Mammary epithelial cell (primary cell): ENCODE measurements at regions of chr12 and their contacts with region 1.

Region 1: DNA sequence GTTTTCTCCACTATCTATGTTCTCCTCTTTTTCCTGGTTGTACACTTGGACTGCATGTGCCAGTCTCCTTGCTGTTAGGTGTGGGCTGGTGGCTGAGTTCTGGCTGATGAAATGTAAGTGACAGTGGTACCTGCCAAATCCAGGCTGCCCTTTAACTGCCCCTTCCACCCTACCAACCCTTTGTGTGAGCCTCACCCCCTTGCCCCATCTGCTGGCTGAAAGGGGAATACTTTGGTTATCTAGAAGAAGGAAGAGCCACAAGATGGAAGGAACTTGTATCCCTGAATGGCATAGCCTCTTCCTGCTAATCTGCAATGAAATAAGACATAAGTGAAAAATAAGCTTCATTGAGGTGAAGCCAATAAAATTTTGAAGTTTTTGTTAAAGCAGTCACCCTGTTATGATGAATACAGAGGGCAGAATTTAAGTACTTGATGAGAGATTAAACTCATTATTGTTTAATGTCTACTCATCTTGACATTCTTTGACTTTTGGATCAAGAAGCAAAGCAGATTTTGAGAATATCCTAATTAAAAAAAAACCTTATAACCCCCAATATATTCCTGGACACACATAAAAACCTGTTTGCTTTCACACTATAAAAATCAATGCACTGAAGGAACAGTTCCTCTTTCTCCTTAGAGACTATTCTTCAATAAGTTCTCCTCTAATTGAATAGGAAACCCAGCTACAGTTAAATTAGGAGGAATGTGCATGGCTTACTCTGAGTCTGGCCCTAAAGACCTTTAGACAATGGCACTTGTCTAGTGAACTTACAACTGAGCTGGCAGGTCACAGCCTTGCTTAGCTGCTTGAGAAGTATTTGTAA is 262.6 kb upstream of the BTG1 start:
- DNase-seq: peak; percentile 55
- H3K4me3 ChIP-seq: no peak overlapping the region
- H3K27ac ChIP-seq: no peak overlapping the region
- H3K4me1 ChIP-seq: no peaks in the 10 kb centered on the region
- H3K27me3 ChIP-seq: no peaks in the 10 kb centered on the region
- CTCF ChIP-seq: peak; percentile 66 to 75

Region 2: GRCh38 chr12:91577586-91578539 is 830.4 kb before region 1 on chr12:
- CTCF ChIA-PET with region 1: no interaction called
- dilution Hi-C with region 1: no loop called
- in situ Hi-C with region 1: no loop called
- intact Hi-C with region 1: loop called (anchors 5 kb)
- DNase-seq: peak; percentile 37
- H3K4me3 ChIP-seq: peak overlapping the region in 2 of 3 experiments; percentile 38 to 46
- H3K27ac ChIP-seq: no peak overlapping the region
- H3K4me1 ChIP-seq: no peaks in the 10 kb centered on the region
- H3K27me3 ChIP-seq: no peaks in the 10 kb centered on the region
- CTCF ChIP-seq: peak; percentile 56 to 58

Region 3: GRCh38 chr12:92007787-92008186 is 400.5 kb before region 1 on chr12:
- CTCF ChIA-PET with region 1: no interaction called
- dilution Hi-C with region 1: no loop called
- in situ Hi-C with region 1: no loop called
- intact Hi-C with region 1: loop called (anchors 2 kb)
- DNase-seq: no peak
- H3K4me3 ChIP-seq: no peak overlapping the region
- H3K27ac ChIP-seq: no peak overlapping the region
- H3K4me1 ChIP-seq: no peaks in the 10 kb centered on the region
- H3K27me3 ChIP-seq: no peaks in the 10 kb centered on the region
- CTCF ChIP-seq: no peak

Region 4: GRCh38 chr12:92369643-92370042 is 38.6 kb before region 1 on chr12:
- CTCF ChIA-PET with region 1: no interaction called
- dilution Hi-C with region 1: no loop called
- in situ Hi-C with region 1: no loop called
- intact Hi-C with region 1: no loop called
- DNase-seq: peak; percentile 90
- H3K4me3 ChIP-seq: no peak overlapping the region
- H3K27ac ChIP-seq: peak overlapping the region; percentile 73
- H3K4me1 ChIP-seq: peaks cover 21% of the 10 kb centered on the region
- H3K27me3 ChIP-seq: no peaks in the 10 kb centered on the region
- CTCF ChIP-seq: no peak

Region 5: GRCh38 chr12:92505254-92506231 is 97.3 kb after region 1 on chr12:
- CTCF ChIA-PET with region 1: no interaction called
- dilution Hi-C with region 1: loop called (anchors 5 kb)
- in situ Hi-C with region 1: no loop called
- intact Hi-C with region 1: no loop called
- DNase-seq: no peak
- H3K4me3 ChIP-seq: no peak overlapping the region
- H3K27ac ChIP-seq: no peak overlapping the region
- H3K4me1 ChIP-seq: peaks cover 3% of the 10 kb centered on the region
- H3K27me3 ChIP-seq: no peaks in the 10 kb centered on the region
- CTCF ChIP-seq: no peak